GM12878 (cell line): ENCODE measurements at regions of chr4 and their contacts with region 1.

Region 1: GRCh38 chr4:53653484-53654053 is 62.3 kb upstream of the LNX1 start:
- DNase-seq: peak; percentile 74
- ATAC-seq: peak; percentile 84
- H3K4me3 ChIP-seq: no peak overlapping the region
- H3K27ac ChIP-seq: peak overlapping the region; percentile 9; the same call in 1 of the 2 replicates
- H3K4me1 ChIP-seq: peaks cover 16% of the 10 kb centered on the region
- H3K27me3 ChIP-seq: no peaks in the 10 kb centered on the region
- CTCF ChIP-seq: peak; percentile 17 to 48 (median 21); a peak in 2 of 6 replicates
- EP300 ChIP-seq: peak; percentile 73 to 89; a peak in 3 of 4 replicates
- POLR2A ChIP-seq: no peak
- RAD21 ChIP-seq: peak; percentile 43; the same call in 1 of the 2 replicates

Region 2: GRCh38 chr4:53196882-53197771 is 456.4 kb before region 1 on chr4:
- CTCF ChIA-PET with region 1: interaction called, 17 read pairs
- POLR2A ChIA-PET with region 1: interaction called, 6 read pairs
- RAD21 ChIA-PET with region 1: interaction called, 12 read pairs
- SMC1A ChIA-PET with region 1: interaction called, 9 read pairs
- in situ Hi-C with region 1: no loop called
- intact Hi-C with region 1: no loop called
- DNase-seq: peak; percentile 44
- ATAC-seq: peak; percentile 85
- H3K4me3 ChIP-seq: no peak overlapping the region
- H3K27ac ChIP-seq: no peak overlapping the region
- H3K4me1 ChIP-seq: no peaks in the 10 kb centered on the region
- H3K27me3 ChIP-seq: no peaks in the 10 kb centered on the region
- CTCF ChIP-seq: peak; percentile 53 to 75 (median 64); a peak in 5 of 6 replicates
- EP300 ChIP-seq: no peak
- POLR2A ChIP-seq: no peak
- RAD21 ChIP-seq: peak; percentile 94

Region 3: GRCh38 chr4:53507671-53508286 is 145.8 kb before region 1 on chr4:
- CTCF ChIA-PET with region 1: interaction called, 6 read pairs
- POLR2A ChIA-PET with region 1: interaction called, 5 read pairs
- RAD21 ChIA-PET with region 1: interaction called, 8 read pairs
- SMC1A ChIA-PET with region 1: interaction called, 4 read pairs
- in situ Hi-C with region 1: no loop called
- intact Hi-C with region 1: loop called (anchors 5 kb)
- DNase-seq: no peak
- ATAC-seq: peak; percentile 80
- H3K4me3 ChIP-seq: no peak overlapping the region
- H3K27ac ChIP-seq: no peak overlapping the region
- H3K4me1 ChIP-seq: no peaks in the 10 kb centered on the region
- H3K27me3 ChIP-seq: no peaks in the 10 kb centered on the region
- CTCF ChIP-seq: no peak
- EP300 ChIP-seq: no peak
- POLR2A ChIP-seq: no peak
- RAD21 ChIP-seq: no peak

Region 4: GRCh38 chr4:53617101-53617680 is 36.4 kb before region 1 on chr4:
- CTCF ChIA-PET with region 1: interaction called, 16 read pairs
- POLR2A ChIA-PET with region 1: no interaction called
- RAD21 ChIA-PET with region 1: interaction called, 3 read pairs
- SMC1A ChIA-PET with region 1: interaction called, 16 read pairs
- in situ Hi-C with region 1: no loop called
- intact Hi-C with region 1: no loop called
- DNase-seq: no peak
- ATAC-seq: peak; percentile 75
- H3K4me3 ChIP-seq: no peak overlapping the region
- H3K27ac ChIP-seq: no peak overlapping the region; the same call in 1 of the 2 replicates
- H3K4me1 ChIP-seq: no peaks in the 10 kb centered on the region
- H3K27me3 ChIP-seq: no peaks in the 10 kb centered on the region
- CTCF ChIP-seq: no peak
- EP300 ChIP-seq: no peak
- POLR2A ChIP-seq: no peak
- RAD21 ChIP-seq: no peak

Region 5: GRCh38 chr4:53671757-53672156 is 18.2 kb after region 1 on chr4:
- CTCF ChIA-PET with region 1: interaction called, 3 read pairs
- POLR2A ChIA-PET with region 1: no interaction called
- RAD21 ChIA-PET with region 1: interaction called, 3 read pairs
- SMC1A ChIA-PET with region 1: interaction called, 11 read pairs
- in situ Hi-C with region 1: no loop called
- intact Hi-C with region 1: no loop called
- DNase-seq: no peak
- ATAC-seq: no peak
- H3K4me3 ChIP-seq: no peak overlapping the region
- H3K27ac ChIP-seq: no peak overlapping the region
- H3K4me1 ChIP-seq: no peaks in the 10 kb centered on the region
- H3K27me3 ChIP-seq: no peaks in the 10 kb centered on the region; a peak in 1 of 4 replicates
- CTCF ChIP-seq: no peak
- EP300 ChIP-seq: no peak
- POLR2A ChIP-seq: no peak
- RAD21 ChIP-seq: no peak

Region 6: GRCh38 chr4:53695540-53696463 is 42.2 kb after region 1 on chr4:
- CTCF ChIA-PET with region 1: interaction called, 9 read pairs
- POLR2A ChIA-PET with region 1: interaction called, 27 read pairs
- RAD21 ChIA-PET with region 1: interaction called, 25 read pairs
- SMC1A ChIA-PET with region 1: interaction called, 109 read pairs
- in situ Hi-C with region 1: loop called (anchors 10 kb)
- intact Hi-C with region 1: no loop called
- DNase-seq: peak; percentile 53
- ATAC-seq: peak; percentile 91
- H3K4me3 ChIP-seq: no peak overlapping the region
- H3K27ac ChIP-seq: peak overlapping the region; percentile 0; the same call in 1 of the 2 replicates
- H3K4me1 ChIP-seq: peaks cover 7% of the 10 kb centered on the region
- H3K27me3 ChIP-seq: no peaks in the 10 kb centered on the region
- CTCF ChIP-seq: no peak
- EP300 ChIP-seq: peak; percentile 13 to 34; a peak in 1 of 4 replicates
- POLR2A ChIP-seq: no peak
- RAD21 ChIP-seq: no peak

Region 7: DNA sequence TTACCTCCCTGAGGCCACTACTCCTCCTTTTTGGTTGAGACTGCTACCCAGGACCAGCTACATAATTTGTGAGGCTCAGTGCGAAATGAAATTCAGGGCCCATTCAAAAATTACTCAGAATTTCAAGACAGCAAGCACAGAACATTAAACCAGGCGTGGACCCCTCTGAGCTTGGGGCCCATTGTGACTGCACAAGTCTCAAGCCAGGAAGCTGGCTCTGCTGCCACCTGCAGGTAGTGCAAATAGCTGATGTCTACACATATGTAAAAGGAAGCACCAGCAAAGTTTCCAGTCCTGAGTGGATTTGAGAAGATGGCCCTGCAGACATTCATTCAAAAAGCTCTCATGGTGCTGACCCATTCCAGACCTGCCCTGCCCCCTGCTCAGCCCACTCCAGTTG is 151.2 kb after region 1 on chr4:
- CTCF ChIA-PET with region 1: interaction called, 10 read pairs
- POLR2A ChIA-PET with region 1: no interaction called
- RAD21 ChIA-PET with region 1: interaction called, 8 read pairs
- SMC1A ChIA-PET with region 1: interaction called, 26 read pairs
- in situ Hi-C with region 1: no loop called
- intact Hi-C with region 1: loop called (anchors 5 kb)
- DNase-seq: peak; percentile 12
- ATAC-seq: peak; percentile 98
- H3K4me3 ChIP-seq: no peak overlapping the region
- H3K27ac ChIP-seq: no peak overlapping the region
- H3K4me1 ChIP-seq: 0 out of 2 replicates have a peak, but pooled peaks cover 3% of the 10 kb centered on the region
- H3K27me3 ChIP-seq: no peaks in the 10 kb centered on the region
- CTCF ChIP-seq: peak; percentile 65 to 74 (median 72)
- EP300 ChIP-seq: no peak
- POLR2A ChIP-seq: no peak
- RAD21 ChIP-seq: peak; percentile 77